ENCODE measurements at regions of chr2 and their contacts with region 1.

Region 1: DNA sequence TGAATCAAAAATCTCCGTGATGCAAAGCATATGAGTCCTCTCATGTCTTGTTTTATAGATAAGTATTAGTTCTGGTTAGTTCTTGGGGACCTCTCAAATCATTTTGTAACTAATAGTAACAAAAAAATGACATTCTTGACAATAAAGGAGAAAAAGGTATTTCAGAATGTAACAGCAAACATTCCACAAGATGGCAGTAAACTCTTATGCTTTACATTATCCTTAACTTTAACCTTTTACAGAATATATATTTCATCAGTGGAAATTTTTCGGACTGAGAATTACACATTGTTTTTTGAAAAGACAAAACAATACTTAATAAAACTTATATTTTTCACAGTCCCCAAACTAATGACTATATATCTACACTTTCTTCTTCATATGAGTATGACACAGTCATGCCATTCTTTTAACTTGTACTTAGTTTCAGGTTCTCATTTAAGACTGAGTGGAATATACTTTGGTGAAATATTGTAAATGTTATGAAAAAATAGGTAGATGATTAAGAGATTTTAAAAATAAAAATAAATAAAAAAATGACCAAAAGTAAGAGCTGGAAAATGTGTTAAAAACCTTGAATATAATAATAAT is 142.9 kb upstream of the NXPH2 start:
- DNase-seq: peak; percentile 64
- H3K4me3 ChIP-seq: no peak overlapping the region
- H3K27ac ChIP-seq: no peak overlapping the region
- H3K4me1 ChIP-seq: peaks cover 18% of the 10 kb centered on the region
- H3K27me3 ChIP-seq: no peaks in the 10 kb centered on the region
- CTCF ChIP-seq: peak; percentile 65

Region 2: GRCh38 chr2:138846223-138846821 is 76.7 kb before region 1 on chr2:
- CTCF ChIA-PET with region 1: no interaction called
- POLR2A ChIA-PET with region 1: no interaction called
- intact Hi-C with region 1: loop called (anchors 2 kb)
- DNase-seq: peak; percentile 77
- H3K4me3 ChIP-seq: no peak overlapping the region
- H3K27ac ChIP-seq: no peak overlapping the region
- H3K4me1 ChIP-seq: no peaks in the 10 kb centered on the region
- H3K27me3 ChIP-seq: no peaks in the 10 kb centered on the region
- CTCF ChIP-seq: peak; percentile 88

Region 3: GRCh38 chr2:139478206-139478914 is 555.3 kb after region 1 on chr2:
- CTCF ChIA-PET with region 1: no interaction called
- POLR2A ChIA-PET with region 1: no interaction called
- intact Hi-C with region 1: loop called (anchors 10 kb)
- DNase-seq: peak; percentile 88
- H3K4me3 ChIP-seq: no peak overlapping the region
- H3K27ac ChIP-seq: no peak overlapping the region
- H3K4me1 ChIP-seq: peaks cover 17% of the 10 kb centered on the region
- H3K27me3 ChIP-seq: no peaks in the 10 kb centered on the region
- CTCF ChIP-seq: peak; percentile 61